ENCODE measurements at regions of chr1 and their contacts with region 1.

Region 1: GRCh38 chr1:156608036-156608674 is 6.9 kb upstream of the GPATCH4 start:
- DNase-seq: peak in 1 of 2 donors; percentile 70
- ATAC-seq: peak; percentile 84 to 96 (median 93)
- H3K4me3 ChIP-seq: no peak overlapping the region
- H3K27ac ChIP-seq: no peak overlapping the region
- H3K4me1 ChIP-seq: peaks cover 0 to 9% (median 0%) of the 10 kb centered on the region in 9 donors
- H3K27me3 ChIP-seq: peaks cover 0 to 22% (median 0%) of the 10 kb centered on the region in 7 donors
- CTCF ChIP-seq: peak; percentile 64 to 86 (median 78)

Region 2: DNA sequence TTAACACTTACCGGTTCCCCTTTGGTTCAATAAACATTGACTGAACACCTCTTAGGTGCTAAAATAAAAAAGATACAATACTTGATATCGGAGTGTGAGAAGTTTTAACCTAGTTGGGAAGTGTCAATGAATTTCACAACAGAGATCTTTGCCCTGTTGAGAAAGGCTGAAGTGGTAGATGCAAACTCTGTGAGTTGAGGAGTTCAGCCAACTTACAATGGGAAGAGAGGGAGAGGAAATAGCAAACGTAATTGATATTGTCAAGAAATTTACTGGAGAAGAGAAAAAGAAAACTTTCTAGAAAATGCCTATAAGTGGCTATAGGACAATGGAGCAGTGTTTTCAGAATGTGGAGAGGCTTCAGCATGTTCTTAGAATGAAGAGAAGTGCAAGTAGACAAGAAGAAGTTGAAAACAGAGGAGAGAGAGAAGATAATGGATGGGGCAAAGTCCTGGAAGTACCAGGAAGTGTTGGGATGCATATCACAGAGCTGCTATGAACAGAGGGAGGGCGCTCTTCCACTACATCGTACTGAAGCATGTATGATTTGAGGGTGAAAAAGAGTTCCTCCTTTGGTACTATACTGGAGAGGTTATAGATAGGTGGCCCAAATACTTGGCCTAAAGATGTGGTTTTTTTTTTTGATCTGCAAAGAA is 156.5 kb before region 1 on chr1:
- intact Hi-C with region 1: loop called (anchors 1 to 10 kb)
- DNase-seq: no peak
- ATAC-seq: no peak
- H3K4me3 ChIP-seq: no peak overlapping the region
- H3K27ac ChIP-seq: no peak overlapping the region
- H3K4me1 ChIP-seq: peaks cover 0 to 14% (median 5%) of the 10 kb centered on the region in 9 donors
- H3K27me3 ChIP-seq: peaks cover 0 to 5% (median 0%) of the 10 kb centered on the region in 7 donors
- CTCF ChIP-seq: no peak

Region 3: DNA sequence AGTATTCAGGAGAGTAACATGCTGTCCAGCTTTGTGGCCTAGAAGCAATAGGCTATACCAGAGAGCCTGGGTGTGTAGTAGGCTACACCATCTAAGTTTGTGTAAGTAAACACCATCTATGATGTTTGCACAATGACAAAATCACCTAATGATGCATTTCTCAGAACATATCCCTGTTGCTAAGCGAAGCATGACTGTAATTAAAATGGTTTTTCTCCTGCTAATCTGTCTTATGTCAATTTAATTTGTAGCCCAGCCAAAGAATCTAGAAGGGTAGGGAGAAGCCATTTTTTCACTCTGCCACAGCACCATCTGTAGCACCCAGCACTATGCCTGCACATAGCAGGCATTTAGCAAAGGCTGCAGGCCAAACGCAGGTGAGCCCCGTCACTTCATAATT is 30.6 kb before region 1 on chr1:
- intact Hi-C with region 1: loop called in 1 of 10 experiments (anchors 5 kb)
- DNase-seq: no peak
- ATAC-seq: no peak
- H3K4me3 ChIP-seq: no peak overlapping the region
- H3K27ac ChIP-seq: no peak overlapping the region
- H3K4me1 ChIP-seq: peaks cover 0 to 4% (median 2%) of the 10 kb centered on the region in 9 donors
- H3K27me3 ChIP-seq: no peaks in the 10 kb centered on the region
- CTCF ChIP-seq: no peak